Activated T-helper 2 cell treated with anti-CD3 and anti-CD28 coated beads, Interferon-gamma antibody, Interleukin-2, Interleukin-4, amounts not matched to agents 10 μg/mL and 5 μg/mL and 100 μg/mL, durations not matched to agents 14 hours and 24 hours and 36 hours (primary cell): ENCODE measurements at regions of chr16 and their contacts with region 1.

Region 1: DNA sequence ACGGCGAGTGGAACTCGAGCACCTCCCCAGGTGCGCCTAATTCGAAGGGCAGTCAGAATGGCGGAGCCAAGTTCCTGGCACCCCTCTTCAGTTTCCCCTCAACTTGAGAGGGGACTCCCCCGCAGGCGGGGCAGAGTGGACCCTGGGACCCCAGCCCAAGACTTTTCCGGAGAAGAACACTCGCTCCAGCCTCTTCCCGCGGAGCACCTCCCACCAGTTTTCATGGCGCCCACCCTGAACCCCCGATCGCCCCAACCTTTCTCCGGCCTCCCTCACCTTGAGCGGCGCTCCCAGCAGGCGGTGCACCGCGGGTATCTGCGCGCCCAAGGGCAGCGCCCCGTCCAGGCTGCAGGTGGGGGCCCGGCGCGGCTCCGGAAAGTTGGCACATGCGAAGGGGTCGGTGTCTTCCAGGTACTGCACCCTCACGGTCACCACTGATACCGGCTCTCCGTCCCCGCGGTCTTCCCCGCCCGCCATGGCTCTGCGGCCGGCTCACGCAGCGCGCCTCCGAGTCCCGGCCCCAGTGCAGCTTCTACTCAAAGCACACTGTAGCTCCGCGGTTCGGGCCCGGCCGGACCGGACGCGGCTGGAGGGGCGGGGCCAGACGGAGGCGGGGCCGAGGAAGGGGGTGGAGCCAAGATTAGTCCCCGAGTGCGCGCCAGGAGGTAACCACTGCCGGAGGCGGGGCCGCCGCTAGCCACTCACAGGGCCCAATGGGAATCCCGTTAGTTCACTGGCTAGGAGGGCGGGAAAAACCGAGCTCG is at the start of gene FHOD1:
- DNase-seq: peak; percentile 98
- H3K4me3 Mint-ChIP-seq: peak within 1 kb of the TSS; percentile 82
- H3K27ac Mint-ChIP-seq: peak within 1 kb of the TSS; percentile 77
- H3K4me1 Mint-ChIP-seq: peaks cover 46% of the 10 kb centered on the region
- H3K27me3 Mint-ChIP-seq: peaks cover 12% of the 10 kb centered on the region
- total RNA-seq, gene FHOD1: 134 and 141 TPM in 2 replicates

Region 2: DNA sequence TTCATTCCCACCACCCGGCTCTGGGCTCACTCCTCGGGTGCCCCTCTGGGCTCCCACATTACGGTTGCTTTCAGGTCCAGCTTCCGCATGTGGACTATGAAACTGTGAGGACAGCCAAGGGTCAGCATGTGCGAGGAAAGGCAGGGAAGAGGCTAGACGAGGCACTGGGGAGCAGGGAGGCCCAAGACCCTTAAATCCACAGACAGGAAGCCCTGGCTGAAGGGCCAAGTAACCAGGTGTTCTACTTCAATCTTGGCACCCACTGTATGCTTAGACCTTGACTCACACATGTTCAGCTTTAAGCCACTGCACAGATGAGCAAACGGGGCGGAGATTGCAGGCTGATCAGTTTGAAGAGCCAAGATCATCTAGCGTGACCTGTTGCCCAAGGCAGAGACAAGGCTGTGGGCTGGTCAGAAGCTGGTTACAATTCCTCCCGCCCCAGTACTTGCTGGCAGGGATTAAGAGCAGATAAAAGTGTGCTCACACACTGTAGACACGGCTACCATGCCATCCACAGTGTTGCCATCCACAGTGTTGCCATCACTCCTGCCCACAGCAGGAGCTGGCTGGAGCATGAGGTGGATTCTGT is 258.8 kb before region 1 on chr16 and contains the start of gene CES4A:
- intact Hi-C with region 1: loop called (anchors 10 kb)
- DNase-seq: no peak
- H3K4me3 Mint-ChIP-seq: peak within 1 kb of the TSS; percentile 61
- H3K27ac Mint-ChIP-seq: peak within 1 kb of the TSS; percentile 88
- H3K4me1 Mint-ChIP-seq: peaks cover 40% of the 10 kb centered on the region
- H3K27me3 Mint-ChIP-seq: no peaks in the 10 kb centered on the region
- total RNA-seq, gene CES4A: 29.8 and 30.1 TPM in 2 replicates

Region 3: DNA sequence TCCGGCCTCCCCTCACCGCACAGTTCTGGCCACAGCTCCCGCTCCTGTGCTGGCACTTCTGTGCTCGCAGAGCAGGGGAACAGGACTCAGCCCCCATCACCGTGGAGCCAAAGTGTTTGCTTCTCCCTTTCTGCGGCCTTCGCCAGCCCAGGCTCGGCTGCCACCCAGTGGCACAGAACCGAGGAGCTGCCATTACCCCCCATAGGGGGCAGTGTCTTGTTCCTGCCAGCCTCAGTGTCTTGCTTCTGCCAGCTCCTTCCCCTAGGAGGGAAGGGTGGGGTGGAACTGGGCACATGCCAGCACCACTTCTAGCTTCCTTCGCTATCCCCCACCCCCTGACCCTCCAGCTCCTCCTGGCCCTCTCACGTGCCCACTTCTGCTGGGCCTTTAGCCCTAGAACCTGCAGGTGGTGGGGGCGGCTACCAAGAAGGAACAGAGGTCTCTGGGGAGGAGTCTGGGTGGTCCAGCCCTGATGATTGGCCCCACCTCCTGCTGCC is 48.8 kb before region 1 on chr16:
- intact Hi-C with region 1: no loop called
- DNase-seq: no peak
- H3K4me3 Mint-ChIP-seq: no peak overlapping the region
- H3K27ac Mint-ChIP-seq: no peak overlapping the region
- H3K4me1 Mint-ChIP-seq: peaks cover 16% of the 10 kb centered on the region
- H3K27me3 Mint-ChIP-seq: no peaks in the 10 kb centered on the region

Region 4: GRCh38 chr16:67226804-67227557 is 20.1 kb before region 1 on chr16 and contains the start of gene TMEM208:
- intact Hi-C with region 1: loop called (anchors 1 kb)
- DNase-seq: peak; percentile 99
- H3K4me3 Mint-ChIP-seq: peak within 1 kb of the TSS; percentile 98
- H3K27ac Mint-ChIP-seq: peak within 1 kb of the TSS; percentile 93
- H3K4me1 Mint-ChIP-seq: peaks cover 40% of the 10 kb centered on the region
- H3K27me3 Mint-ChIP-seq: no peaks in the 10 kb centered on the region
- total RNA-seq, gene TMEM208: 53.8 and 55.4 TPM in 2 replicates

Region 5: GRCh38 chr16:67279296-67280089 is 32.4 kb after region 1 on chr16 and contains the start of gene PLEKHG4:
- intact Hi-C with region 1: loop called (anchors 2 kb)
- DNase-seq: peak; percentile 77
- H3K4me3 Mint-ChIP-seq: peak within 1 kb of the TSS; percentile 84
- H3K27ac Mint-ChIP-seq: peak within 1 kb of the TSS; percentile 86
- H3K4me1 Mint-ChIP-seq: peaks cover 24% of the 10 kb centered on the region
- H3K27me3 Mint-ChIP-seq: no peaks in the 10 kb centered on the region
- total RNA-seq, gene PLEKHG4: 30.4 and 33.4 TPM in 2 replicates

Region 6: DNA sequence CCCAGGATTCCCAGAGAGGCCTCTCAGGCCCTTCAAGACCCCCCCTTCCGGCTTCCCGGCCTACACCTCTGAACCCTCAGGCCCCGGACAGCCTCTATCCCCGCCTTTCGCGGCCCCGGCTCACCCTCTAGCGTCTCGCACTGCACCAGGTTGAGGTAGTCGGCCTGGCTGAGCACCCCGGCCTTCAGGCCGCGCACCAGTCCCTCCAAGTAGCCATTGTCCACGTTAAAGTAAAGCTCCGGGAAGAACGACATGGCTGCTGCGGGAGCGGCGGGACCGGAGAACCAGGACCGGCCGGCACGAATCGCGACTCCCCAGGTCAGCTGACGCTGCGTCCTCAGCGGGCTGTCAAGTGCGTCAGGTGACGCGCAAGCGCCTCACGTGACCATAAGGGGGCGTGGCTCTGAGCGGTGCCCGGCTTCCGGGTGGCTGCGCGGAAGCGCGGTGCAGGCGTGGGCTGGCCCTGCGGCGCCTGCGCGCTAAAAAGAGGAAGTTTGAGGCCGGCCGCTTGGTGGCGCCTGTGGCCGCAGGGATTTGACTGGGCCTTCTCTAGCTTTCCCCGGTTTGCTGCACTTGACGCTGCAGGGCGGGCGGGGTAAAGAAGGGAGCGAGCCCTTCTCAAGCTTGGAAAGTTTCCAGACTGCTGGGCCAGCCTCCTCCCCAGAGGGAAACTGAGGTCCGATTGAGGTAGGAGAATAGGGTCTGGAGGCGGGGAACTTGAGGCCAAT is 233.9 kb after region 1 on chr16 and contains the start of gene ATP6V0D1:
- intact Hi-C with region 1: loop called (anchors 5 kb)
- DNase-seq: peak; percentile 99
- H3K4me3 Mint-ChIP-seq: peak within 1 kb of the TSS; percentile 99
- H3K27ac Mint-ChIP-seq: peak within 1 kb of the TSS; percentile 98
- H3K4me1 Mint-ChIP-seq: peaks cover 23% of the 10 kb centered on the region
- H3K27me3 Mint-ChIP-seq: no peaks in the 10 kb centered on the region
- total RNA-seq, gene ATP6V0D1: 31.5 and 33.9 TPM in 2 replicates

Region 7: DNA sequence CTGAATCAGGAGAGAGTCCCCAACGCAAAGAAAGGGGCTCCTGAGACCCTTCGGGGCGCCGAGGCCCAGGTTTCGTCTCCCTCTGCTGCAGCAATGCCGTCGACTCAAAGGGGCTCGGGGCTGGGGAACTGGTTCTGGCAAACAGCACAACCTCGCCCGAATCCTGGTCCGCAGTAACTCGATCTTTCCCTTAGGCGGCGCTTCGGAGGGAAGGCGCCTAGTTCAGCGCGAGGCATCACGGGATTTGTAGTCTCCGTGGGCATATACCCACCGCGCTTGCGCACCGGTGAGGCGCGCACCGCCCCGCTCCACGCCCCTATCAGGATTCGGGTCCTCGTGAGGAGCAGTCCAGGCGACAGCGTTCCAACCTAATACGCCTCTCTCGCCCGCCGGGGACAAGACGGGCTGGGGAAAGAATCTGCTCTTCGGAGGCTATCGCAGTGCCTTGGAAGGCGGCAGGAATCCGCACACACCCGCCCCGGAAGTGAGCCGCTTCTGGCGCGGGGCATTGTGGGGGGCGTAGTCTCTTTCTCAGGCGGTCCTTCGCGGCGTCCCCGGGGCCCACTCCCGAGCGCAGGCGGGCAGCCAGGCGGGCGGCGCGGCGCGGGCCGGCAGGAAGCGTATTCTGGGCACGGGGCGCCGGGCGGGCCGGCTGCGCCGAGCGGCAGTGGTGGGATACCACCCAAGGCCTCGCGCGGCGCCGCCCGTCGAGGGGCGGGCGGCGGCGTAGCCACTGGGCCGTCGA is 594.8 kb after region 1 on chr16 and contains the start of gene THAP11:
- intact Hi-C with region 1: loop called (anchors 10 kb)
- DNase-seq: peak; percentile 92
- H3K4me3 Mint-ChIP-seq: peak within 1 kb of the TSS; percentile 89
- H3K27ac Mint-ChIP-seq: peak within 1 kb of the TSS; percentile 94
- H3K4me1 Mint-ChIP-seq: peaks cover 29% of the 10 kb centered on the region
- H3K27me3 Mint-ChIP-seq: no peaks in the 10 kb centered on the region
- total RNA-seq, gene THAP11: 43.0 and 45.1 TPM in 2 replicates